Transverse colon (tissue), 4 donors: ENCODE measurements at regions of chr7 and their contacts with region 1.

Region 1: DNA sequence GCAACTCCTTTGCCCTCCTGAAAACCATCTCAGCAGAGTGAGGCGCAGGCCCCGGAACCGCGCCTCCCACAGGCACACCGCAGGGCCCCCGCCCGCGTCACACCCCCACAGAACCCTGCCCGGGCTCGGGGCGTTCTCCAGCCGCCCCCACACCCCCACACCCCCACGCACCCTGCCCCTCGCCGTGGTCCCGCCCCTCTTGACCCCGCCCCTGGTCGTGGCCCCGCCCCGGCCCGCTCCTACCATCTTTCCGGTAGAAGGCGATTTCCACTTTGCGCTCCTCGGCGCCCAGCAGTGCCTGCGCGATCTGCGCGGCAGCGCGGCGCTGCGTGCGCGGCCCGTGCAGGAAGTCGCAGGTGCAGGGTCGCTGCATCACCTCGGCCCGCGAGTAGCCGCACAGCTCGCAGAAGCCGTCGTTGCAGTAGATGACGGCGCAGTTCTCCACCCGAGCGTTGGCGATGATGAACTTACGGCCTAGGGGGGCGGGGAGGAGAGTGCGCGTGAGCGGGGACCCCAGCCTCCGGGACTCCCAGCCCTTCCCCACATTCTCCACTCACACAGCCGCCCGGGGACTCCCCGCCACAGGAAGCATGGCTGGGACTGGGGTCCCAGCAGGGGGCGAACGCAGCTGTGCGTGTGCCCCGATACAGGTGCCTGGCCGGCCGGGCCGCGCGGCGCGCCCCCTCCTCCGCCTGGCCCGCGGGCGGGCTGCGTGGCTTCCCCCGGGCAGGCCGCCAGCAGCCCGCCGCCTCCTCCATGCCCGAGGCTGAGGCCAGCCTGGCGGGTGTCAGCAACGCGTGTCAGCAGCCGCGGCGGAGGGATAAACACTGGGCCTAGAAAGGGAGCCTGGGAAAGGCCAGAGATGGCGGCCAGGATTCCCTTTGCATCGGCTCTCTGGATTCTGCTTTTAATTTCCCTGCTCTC is 3.4 kb downstream of the KCNH2 start:
- DNase-seq: peak; percentile 83
- H3K4me3 ChIP-seq: peak overlapping the region; percentile 24 to 54 (median 44)
- H3K27ac ChIP-seq: peak overlapping the region; percentile 74 to 94 (median 84)
- H3K4me1 ChIP-seq: peaks cover 47 to 90% (median 70%) of the 10 kb centered on the region in 4 donors
- H3K27me3 ChIP-seq: peaks cover 31% of the 10 kb centered on the region
- CTCF ChIP-seq: peak in 4 of 5 experiments; percentile 25 to 39 (median 28)
- EP300 ChIP-seq: no peak
- POLR2A ChIP-seq: peak; percentile 35

Region 2: GRCh38 chr7:150778738-150779301 is 195.9 kb before region 1 on chr7:
- in situ Hi-C with region 1: loop called in 2 of 4 experiments (anchors 25 kb)
- intact Hi-C with region 1: no loop called
- DNase-seq: peak; percentile 91
- H3K4me3 ChIP-seq: no peak overlapping the region
- H3K27ac ChIP-seq: peak overlapping the region in 3 of 4 donors; percentile 28 to 35 (median 32)
- H3K4me1 ChIP-seq: peaks cover 3 to 42% (median 12%) of the 10 kb centered on the region in 4 donors
- H3K27me3 ChIP-seq: no peaks in the 10 kb centered on the region
- CTCF ChIP-seq: peak; percentile 88 to 95 (median 89)
- EP300 ChIP-seq: no peak
- POLR2A ChIP-seq: no peak

Region 3: GRCh38 chr7:150898475-150899011 is 76.2 kb before region 1 on chr7:
- in situ Hi-C with region 1: loop called in 1 of 4 experiments (anchors 25 kb)
- intact Hi-C with region 1: no loop called
- DNase-seq: peak; percentile 85
- H3K4me3 ChIP-seq: no peak overlapping the region
- H3K27ac ChIP-seq: peak overlapping the region in 2 of 4 donors; percentile 5 to 62
- H3K4me1 ChIP-seq: peaks cover 19 to 43% (median 34%) of the 10 kb centered on the region in 4 donors
- H3K27me3 ChIP-seq: peaks cover 5% of the 10 kb centered on the region
- CTCF ChIP-seq: peak; percentile 92 to 97 (median 95)
- EP300 ChIP-seq: no peak
- POLR2A ChIP-seq: no peak